Mammary epithelial cell (primary cell): ENCODE measurements at regions of chr17 and their contacts with region 1.

Region 1: DNA sequence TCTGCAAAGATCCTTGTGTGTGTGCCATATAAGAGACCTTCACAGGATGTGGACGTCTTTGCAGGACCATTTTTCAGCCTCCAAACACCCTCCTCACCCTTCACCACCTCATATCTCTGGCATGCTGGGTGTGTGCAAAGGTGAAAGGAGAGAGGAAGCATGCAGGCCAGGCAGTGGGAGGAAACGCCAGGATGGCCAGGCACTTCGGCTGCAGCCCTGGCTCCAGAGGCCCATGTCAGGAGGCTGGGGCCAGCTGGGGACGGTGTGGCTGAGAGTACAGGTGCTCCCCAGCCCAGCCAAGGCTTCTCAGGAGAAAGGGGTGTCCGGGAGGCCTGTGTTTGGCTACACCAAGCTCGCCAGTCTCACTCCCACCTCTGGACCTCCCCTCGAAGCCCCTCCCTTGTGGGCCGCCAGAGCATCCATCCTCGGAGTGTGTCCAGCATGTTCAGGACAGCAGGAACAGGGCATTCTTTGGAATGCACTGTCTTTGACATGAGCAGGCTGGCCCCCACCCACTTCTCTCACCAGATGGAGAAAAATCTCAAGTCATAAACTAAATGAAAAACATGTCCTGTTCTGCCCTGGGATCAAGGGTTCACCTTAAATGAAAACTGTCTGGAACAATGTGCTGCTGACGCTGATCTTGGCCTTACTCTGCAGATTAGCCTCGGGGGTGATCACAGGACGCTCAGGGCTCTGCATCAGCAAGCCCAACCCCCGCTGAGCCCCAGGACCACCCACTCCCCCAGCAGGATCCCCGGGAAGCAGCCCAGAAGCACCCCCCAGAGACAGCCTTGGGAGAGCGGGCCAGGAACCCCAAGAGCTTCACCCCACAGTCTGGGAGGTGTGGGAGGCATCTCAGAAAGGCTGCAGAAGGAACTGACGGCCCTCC is 15.9 kb downstream of the PEMT start:
- DNase-seq: peak; percentile 24
- H3K4me3 ChIP-seq: no peak overlapping the region
- H3K27ac ChIP-seq: no peak overlapping the region
- H3K4me1 ChIP-seq: peaks cover 14% of the 10 kb centered on the region
- H3K27me3 ChIP-seq: no peaks in the 10 kb centered on the region
- CTCF ChIP-seq: no peak

Region 2: GRCh38 chr17:17959520-17960361 is 384.1 kb after region 1 on chr17:
- CTCF ChIA-PET with region 1: interaction called, 20 read pairs
- dilution Hi-C with region 1: no loop called
- in situ Hi-C with region 1: no loop called
- intact Hi-C with region 1: no loop called
- DNase-seq: no peak
- H3K4me3 ChIP-seq: no peak overlapping the region
- H3K27ac ChIP-seq: peak overlapping the region; percentile 97
- H3K4me1 ChIP-seq: peaks cover 32% of the 10 kb centered on the region
- H3K27me3 ChIP-seq: no peaks in the 10 kb centered on the region
- CTCF ChIP-seq: no peak